HAP-1 (cell line): ENCODE measurements at regions of chr3 and their contacts with region 1.

Region 1: DNA sequence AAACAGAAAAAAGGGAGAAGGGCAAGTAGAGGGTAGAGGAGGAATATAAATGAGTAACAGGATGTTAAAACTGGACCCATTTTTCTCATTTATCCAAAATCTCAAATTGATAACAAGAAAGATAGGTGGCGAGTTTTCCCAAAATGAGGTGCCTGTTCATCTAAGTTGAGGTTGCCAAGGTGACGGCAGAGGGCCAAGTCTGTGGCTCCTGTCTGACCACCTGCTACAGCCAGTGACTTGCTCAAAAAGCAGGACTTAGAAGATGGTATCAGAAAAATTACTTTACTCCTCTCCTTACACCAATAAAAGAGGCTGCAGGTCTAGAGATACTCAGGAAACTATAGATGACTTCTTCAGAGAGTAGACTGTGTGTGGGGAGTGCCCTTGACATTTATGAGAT is 137.6 kb upstream of the ZNF385D start:
- DNase-seq: no peak
- H3K4me3 ChIP-seq: no peak overlapping the region
- H3K4me1 ChIP-seq: no peaks in the 10 kb centered on the region
- H3K27me3 ChIP-seq: no peaks in the 10 kb centered on the region

Region 2: GRCh38 chr3:21752749-21753347 is 135.8 kb before region 1 on chr3:
- in situ Hi-C with region 1: loop called (anchors 10 kb)
- DNase-seq: peak; percentile 48 to 61
- H3K4me3 ChIP-seq: no peak overlapping the region
- H3K4me1 ChIP-seq: peaks cover 5% of the 10 kb centered on the region; the same call in 1 of the 2 replicates
- H3K27me3 ChIP-seq: no peaks in the 10 kb centered on the region

Region 3: GRCh38 chr3:22101811-22102210 is 213.2 kb after region 1 on chr3:
- in situ Hi-C with region 1: no loop called
- DNase-seq: no peak
- H3K4me3 ChIP-seq: no peak overlapping the region
- H3K4me1 ChIP-seq: no peaks in the 10 kb centered on the region
- H3K27me3 ChIP-seq: no peaks in the 10 kb centered on the region